K562 (cell line): ENCODE measurements at regions of chr3 and their contacts with region 1.

Region 1: GRCh38 chr3:133901083-133901482 is 5.4 kb upstream of the RAB6B start:
- DNase-seq: peak in 2 of 4 experiments; percentile 29 to 36
- ATAC-seq: peak; percentile 90
- H3K4me3 ChIP-seq: no peak overlapping the region
- H3K27ac ChIP-seq: no peak overlapping the region
- H3K4me1 ChIP-seq: peaks cover 3 to 4% of the 10 kb centered on the region in 2 experiments; a peak in 3 of 5 replicates
- H3K27me3 ChIP-seq: 0 out of 5 replicates have a peak, but pooled peaks cover 0 to 6% of the 10 kb centered on the region in 2 experiments
- CTCF ChIP-seq: peak; percentile 68 to 85 (median 85)
- EP300 ChIP-seq: no peak
- POLR2A ChIP-seq: no peak
- RAD21 ChIP-seq: peak; percentile 64 to 80

Region 2: DNA sequence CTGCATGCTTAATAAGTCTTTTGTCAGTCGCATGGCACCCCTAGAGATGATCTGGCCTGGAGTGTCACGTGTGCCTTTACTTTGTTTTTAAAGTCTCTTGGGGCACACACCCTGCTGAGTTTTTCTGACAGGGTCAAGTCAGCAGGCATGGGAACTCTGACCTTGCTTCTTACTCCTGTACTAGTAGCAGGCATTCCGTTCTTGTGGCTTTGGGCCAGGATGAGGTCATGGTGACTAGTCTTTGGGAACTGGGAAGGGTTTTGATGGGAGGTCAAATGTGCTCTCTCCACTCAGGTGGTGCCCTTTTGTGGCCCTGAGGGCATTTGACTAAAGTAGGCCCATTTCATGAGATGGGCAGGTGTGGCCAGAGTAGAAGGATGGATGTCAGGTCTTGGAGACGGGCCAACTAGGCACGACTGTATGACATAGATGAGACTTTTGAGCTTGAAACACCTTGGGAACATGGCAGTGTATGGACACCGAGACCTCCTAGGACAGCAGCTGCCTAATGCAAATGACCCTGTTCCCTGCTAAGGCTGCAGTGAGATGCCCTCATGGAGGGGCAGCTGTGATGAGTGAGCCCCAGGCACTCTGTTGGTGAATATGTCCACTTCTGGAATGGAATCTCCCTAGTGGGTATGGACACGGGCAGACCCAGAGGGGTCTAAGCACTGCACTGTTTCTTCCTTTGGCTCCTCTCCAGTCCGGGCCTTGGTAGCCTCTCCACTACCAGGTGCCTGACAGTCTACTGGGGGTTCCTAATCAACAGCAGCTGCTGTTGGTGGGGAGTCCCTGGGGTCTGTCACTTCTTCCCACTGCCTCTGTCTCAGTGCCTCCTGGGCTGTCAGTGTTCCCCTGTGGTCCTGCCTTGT is 79.1 kb before region 1 on chr3:
- CTCF ChIA-PET with region 1: no interaction called
- POLR2A ChIA-PET with region 1: no interaction called
- in situ Hi-C with region 1: no loop called
- intact Hi-C with region 1: loop called (anchors 2 kb)
- DNase-seq: peak; percentile 24 to 59 (median 30)
- ATAC-seq: peak; percentile 83
- H3K4me3 ChIP-seq: no peak overlapping the region
- H3K27ac ChIP-seq: no peak overlapping the region
- H3K4me1 ChIP-seq: peaks cover 0 to 4% of the 10 kb centered on the region in 2 experiments; a peak in 3 of 5 replicates
- H3K27me3 ChIP-seq: no peaks in the 10 kb centered on the region
- CTCF ChIP-seq: peak; percentile 38 to 57 (median 57); a peak in 5 of 6 replicates
- EP300 ChIP-seq: no peak
- POLR2A ChIP-seq: 0 out of 2 replicates have a peak, but pooled peaks have one; percentile 31
- RAD21 ChIP-seq: peak in 1 of 2 experiments; percentile 52; a peak in 2 of 4 replicates

Region 3: DNA sequence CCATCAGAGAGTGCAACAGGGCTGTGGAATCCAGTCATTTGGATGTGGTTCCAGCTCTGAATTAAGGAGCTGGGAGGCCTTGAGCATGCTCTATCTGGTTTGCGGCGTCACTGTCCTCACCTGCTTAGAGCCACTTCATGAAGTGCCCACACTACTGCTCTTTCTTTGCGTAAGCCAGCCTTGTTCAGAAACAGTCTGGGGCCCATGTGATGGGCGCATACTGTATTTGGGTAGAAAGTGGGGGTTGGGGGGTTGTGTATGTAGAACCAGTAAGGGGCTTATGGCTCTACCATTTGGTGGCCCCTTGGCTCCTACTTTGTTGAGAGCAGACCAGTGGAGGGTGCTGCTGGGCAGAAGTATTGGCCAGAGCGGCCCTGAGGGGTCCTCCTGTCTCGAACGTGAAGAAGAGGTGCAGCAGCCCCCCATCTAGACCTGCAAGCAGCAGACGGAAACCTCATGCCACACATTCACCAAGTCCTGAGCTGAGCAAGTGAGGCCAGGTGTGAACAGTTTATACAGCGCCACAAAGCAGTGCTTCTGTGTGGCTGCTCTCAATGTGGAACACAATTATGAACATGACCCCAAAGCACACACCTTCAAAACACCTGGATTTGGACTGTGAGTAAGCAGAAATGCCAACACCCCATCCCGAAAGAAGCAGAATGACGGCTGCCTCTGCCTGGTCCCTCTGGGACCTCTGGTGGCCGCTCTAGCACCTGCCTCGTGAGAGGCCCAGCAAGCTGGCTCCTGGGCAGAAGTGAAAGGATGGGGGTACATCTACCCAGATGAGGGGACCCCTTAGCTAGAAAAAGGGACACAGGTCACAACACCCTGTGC is 68.9 kb before region 1 on chr3:
- CTCF ChIA-PET with region 1: no interaction called
- POLR2A ChIA-PET with region 1: no interaction called
- in situ Hi-C with region 1: no loop called
- intact Hi-C with region 1: loop called (anchors 1 kb)
- DNase-seq: no peak
- ATAC-seq: no peak
- H3K4me3 ChIP-seq: no peak overlapping the region
- H3K27ac ChIP-seq: no peak overlapping the region
- H3K4me1 ChIP-seq: peaks cover 0 to 5% of the 10 kb centered on the region in 2 experiments; a peak in 2 of 5 replicates
- H3K27me3 ChIP-seq: no peaks in the 10 kb centered on the region
- CTCF ChIP-seq: peak in 2 of 3 experiments; percentile 28 to 31; a peak in 1 of 6 replicates
- EP300 ChIP-seq: no peak
- POLR2A ChIP-seq: no peak
- RAD21 ChIP-seq: no peak

Region 4: GRCh38 chr3:133887803-133888559 is 13.1 kb before region 1 on chr3:
- CTCF ChIA-PET with region 1: no interaction called
- POLR2A ChIA-PET with region 1: no interaction called
- in situ Hi-C with region 1: no loop called
- intact Hi-C with region 1: no loop called
- DNase-seq: no peak
- ATAC-seq: no peak
- H3K4me3 ChIP-seq: no peak overlapping the region
- H3K27ac ChIP-seq: no peak overlapping the region
- H3K4me1 ChIP-seq: peaks cover 16 to 24% of the 10 kb centered on the region in 2 experiments; a peak in 4 of 5 replicates
- H3K27me3 ChIP-seq: no peaks in the 10 kb centered on the region
- CTCF ChIP-seq: no peak
- EP300 ChIP-seq: no peak
- POLR2A ChIP-seq: no peak
- RAD21 ChIP-seq: no peak

Region 5: DNA sequence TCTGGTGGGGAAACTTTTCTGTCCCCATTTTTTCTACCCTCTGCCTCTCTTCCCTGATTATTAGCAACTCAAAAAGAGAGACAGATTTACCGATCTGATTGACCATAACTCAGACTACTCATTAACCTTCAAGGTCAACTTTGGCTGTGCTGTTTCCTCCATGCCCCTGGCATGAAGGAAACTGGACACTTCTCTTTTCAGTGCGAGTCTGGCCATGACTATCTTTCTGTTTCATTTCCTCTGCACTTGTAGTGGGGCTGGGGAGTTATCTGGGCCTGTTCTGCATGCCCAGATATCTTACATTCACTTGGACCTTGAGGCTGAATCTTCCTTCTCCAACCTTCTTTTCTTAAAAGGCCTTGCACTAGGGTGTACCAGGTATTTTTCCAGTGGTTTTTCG is 205.5 kb after region 1 on chr3:
- CTCF ChIA-PET with region 1: no interaction called
- POLR2A ChIA-PET with region 1: no interaction called
- in situ Hi-C with region 1: no loop called
- intact Hi-C with region 1: no loop called
- DNase-seq: no peak
- ATAC-seq: no peak
- H3K4me3 ChIP-seq: no peak overlapping the region
- H3K27ac ChIP-seq: no peak overlapping the region
- H3K4me1 ChIP-seq: no peaks in the 10 kb centered on the region
- H3K27me3 ChIP-seq: peaks cover 0 to 4% of the 10 kb centered on the region in 2 experiments; a peak in 1 of 5 replicates
- CTCF ChIP-seq: no peak
- EP300 ChIP-seq: no peak
- POLR2A ChIP-seq: no peak
- RAD21 ChIP-seq: no peak